Tibial artery (tissue), 4 donors: ENCODE measurements at regions of chr1 and their contacts with region 1.

Region 1: DNA sequence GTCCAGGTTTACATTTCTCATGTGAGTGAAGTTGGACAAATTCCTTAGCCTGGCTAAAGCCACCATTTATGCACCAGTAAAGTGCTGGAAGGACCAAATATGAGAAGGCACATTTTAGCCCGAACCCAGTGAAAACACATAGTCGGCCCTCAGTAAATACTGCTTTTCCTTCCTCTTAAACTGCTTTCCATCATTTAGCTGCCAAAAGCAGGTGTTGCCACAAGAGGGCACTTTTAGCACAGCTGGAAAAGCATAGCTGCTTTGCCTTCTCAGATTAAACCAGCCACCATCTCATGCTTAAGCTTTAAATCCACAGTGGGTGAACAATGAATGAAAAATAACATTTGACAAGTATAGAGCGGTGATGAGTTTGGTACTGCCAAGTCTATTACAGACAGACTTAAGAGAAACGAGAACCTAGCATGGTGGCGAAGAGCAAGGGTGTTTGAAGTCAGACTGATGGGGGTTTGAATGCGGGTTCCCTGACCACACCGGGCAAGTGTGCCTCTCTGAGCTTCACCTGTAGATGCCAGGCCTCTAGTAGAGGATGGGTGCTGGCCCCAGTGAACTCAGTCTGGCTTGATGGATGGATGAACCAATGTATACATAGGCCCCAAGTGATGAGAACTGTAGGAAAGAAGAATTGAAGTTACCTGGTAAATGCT is 57.8 kb downstream of the SLC35D1 start:
- DNase-seq: peak; percentile 66 to 77
- H3K4me3 ChIP-seq: no peak overlapping the region
- H3K27ac ChIP-seq: no peak overlapping the region
- H3K4me1 ChIP-seq: peaks cover 0 to 6% (median 0%) of the 10 kb centered on the region in 4 donors
- H3K27me3 ChIP-seq: no peaks in the 10 kb centered on the region
- CTCF ChIP-seq: peak; percentile 71 to 82

Region 2: GRCh38 chr1:66764994-66765578 is 231.1 kb before region 1 on chr1:
- intact Hi-C with region 1: loop called (anchors 10 kb)
- DNase-seq: peak in 1 of 2 donors; percentile 48
- H3K4me3 ChIP-seq: no peak overlapping the region
- H3K27ac ChIP-seq: no peak overlapping the region
- H3K4me1 ChIP-seq: no peaks in the 10 kb centered on the region
- H3K27me3 ChIP-seq: no peaks in the 10 kb centered on the region
- CTCF ChIP-seq: peak; percentile 65 to 68

Region 3: DNA sequence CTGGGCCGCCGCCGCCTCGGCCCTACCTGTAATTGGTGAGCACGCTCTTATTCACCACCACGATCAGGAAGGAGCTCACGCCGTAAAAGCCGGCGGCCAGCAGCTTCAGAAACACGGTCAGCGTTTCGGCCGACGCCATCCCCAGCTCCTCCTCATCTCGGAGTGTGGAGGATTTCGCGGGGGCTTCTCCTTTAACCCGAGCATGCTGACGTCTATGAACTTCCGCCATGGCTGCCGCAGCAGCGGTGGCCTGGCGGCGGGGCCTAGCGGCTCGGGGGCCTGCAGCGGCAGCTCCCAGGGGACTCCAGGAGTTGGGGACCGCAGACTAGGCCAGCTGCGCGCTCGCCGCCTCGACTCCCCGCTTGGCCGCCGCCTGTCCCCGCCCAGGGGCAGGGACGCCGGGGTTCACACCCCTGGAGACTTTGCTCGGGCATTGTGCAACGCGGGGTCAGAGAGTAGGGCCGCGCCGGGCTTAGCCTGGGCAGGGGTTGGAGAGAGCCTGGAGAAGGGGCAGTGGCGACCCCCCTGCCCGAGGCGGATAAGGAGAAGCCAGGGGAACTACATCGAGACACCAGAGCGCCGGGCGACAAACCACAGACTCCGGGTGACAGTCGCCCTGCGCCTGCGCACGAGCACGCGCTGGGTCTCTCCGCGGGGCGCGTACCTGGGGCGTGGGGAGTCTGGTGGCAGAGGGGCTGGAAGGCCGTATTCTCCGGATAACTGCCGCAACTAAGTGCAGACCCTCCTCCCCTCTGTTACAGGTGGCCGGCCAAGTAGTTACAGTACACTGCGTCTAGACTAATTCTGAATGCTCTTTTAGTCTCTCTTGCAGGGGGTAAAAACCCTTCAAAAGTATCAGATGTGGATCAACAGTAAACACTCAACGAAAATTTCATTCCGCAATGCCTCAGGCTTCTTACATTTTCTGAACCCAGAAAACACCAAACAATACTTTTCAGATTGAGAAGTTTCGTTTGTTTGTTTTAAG is 57.9 kb after region 1 on chr1 and contains the start of gene SLC35D1:
- intact Hi-C with region 1: loop called (anchors 10 kb)
- DNase-seq: peak; percentile 70 to 87
- H3K4me3 ChIP-seq: peak within 1 kb of the TSS; percentile 74 to 81
- H3K27ac ChIP-seq: peak within 1 kb of the TSS; percentile 92 to 93
- H3K4me1 ChIP-seq: peaks cover 0 to 30% (median 11%) of the 10 kb centered on the region in 4 donors
- H3K27me3 ChIP-seq: no peaks in the 10 kb centered on the region
- CTCF ChIP-seq: no peak

Region 4: DNA sequence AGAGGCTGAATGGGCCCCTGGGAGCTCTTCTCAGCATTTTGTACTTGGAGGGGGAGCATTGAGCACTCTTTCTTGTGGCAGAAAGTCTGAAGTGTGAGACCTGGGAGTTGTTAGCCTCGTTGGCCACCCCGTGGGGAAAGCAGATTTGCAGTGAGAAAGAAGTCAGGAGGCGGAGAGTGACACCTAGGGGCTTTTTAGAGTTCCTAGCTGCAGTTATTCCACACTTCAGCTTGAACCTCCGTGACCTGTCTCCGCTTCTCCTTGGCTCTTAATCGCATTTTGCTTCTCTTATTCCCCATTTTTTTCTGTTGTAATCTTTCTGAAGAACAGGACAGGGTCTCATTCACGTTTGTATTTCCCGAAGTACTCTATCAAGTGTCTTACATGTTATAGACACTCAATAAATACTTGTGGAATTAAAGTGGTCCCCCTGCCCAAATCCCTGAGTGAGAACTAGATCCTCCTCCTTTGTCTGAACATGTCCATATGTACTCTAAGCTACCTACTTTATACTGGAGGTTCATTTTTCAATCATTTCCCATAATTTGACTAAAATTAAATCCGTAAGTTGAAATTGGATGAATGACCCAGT is 153.1 kb after region 1 on chr1:
- intact Hi-C with region 1: loop called (anchors 2 kb)
- DNase-seq: peak; percentile 62 to 77
- H3K4me3 ChIP-seq: no peak overlapping the region
- H3K27ac ChIP-seq: no peak overlapping the region
- H3K4me1 ChIP-seq: peaks cover 0 to 9% (median 4%) of the 10 kb centered on the region in 4 donors
- H3K27me3 ChIP-seq: no peaks in the 10 kb centered on the region
- CTCF ChIP-seq: peak; percentile 89 to 91

Region 5: GRCh38 chr1:67261680-67262079 is 265.5 kb after region 1 on chr1:
- intact Hi-C with region 1: no loop called
- DNase-seq: no peak
- H3K4me3 ChIP-seq: no peak overlapping the region
- H3K27ac ChIP-seq: no peak overlapping the region
- H3K4me1 ChIP-seq: no peaks in the 10 kb centered on the region
- H3K27me3 ChIP-seq: no peaks in the 10 kb centered on the region
- CTCF ChIP-seq: no peak